ENCODE measurements at regions of chr16 and their contacts with region 1.

Region 1: DNA sequence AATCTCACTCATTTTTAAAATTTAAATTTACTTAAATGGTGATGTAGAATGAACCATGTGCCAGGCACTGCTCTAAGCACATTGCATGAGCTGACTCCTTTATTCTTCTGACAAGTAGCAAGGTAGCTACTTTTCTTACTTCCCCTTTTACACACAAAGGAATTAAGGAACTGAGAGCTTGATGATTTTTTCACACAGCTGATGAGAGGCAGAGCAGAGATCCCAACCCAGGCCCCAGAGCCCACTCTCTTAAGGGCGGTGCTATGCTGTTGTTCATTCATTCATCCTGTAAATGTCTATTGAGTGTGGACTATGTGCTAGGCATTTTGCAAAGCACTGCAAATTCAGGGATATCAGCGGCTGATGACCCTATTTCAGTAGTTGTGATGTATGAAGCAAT is 17.9 kb downstream of the SEC14L5 start:
- DNase-seq: peak; percentile 39 to 82 (median 73)
- H3K4me3 ChIP-seq: no peak overlapping the region
- H3K27ac ChIP-seq: no peak overlapping the region
- H3K4me1 ChIP-seq: peaks cover 0 to 27% (median 6%) of the 10 kb centered on the region in 4 experiments
- H3K27me3 ChIP-seq: peaks cover 0 to 8% (median 2%) of the 10 kb centered on the region in 5 experiments

Region 2: DNA sequence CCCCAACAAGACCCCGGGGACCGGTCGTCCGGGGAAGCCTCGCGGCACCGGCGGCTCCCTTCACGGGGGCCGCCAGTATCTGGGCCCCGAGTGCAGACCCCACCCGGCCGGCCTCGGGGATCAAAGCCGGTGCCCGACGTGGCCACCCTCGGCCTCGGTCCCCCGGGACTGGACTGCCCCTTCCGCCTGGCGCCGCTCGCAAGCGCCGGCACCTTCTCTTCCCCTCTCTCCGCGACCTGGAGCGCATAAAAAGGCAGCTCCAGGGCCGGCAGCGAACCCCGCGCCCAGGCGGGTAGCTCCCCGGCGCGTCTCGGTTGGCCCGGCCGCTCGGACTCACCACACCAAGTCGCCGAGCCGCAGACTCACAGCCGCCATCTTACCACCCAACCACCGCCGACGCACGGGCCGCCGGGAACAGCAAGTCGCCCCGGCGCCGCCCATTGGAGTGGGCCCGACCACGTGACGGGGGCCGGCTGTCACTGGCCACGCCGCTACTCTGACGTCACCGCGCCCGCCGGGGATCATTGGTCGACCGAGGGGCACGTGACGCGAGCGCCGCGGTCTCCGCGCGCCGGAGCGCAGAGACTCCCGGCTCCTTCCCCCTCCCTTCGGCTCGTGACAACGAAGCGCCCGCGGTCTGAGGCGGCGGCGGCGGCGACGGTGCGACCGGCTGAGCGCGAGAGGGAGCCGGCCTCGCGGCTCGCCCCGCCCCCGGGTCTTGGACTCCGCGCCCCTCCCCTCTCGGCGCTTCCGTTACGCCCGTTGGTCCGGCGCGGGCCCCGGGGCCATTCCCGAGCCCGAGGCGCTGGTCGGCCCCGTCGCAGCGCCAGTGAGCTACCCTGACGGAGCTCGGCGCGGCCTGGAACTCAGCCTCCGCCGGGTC is 128.9 kb before region 1 on chr16 and contains the starts of genes GLYR1 and UBN1:
- CTCF ChIA-PET with region 1: no interaction called
- POLR2A ChIA-PET with region 1: no interaction called
- DNase-seq: peak; percentile 98 to 99 (median 98)
- H3K4me3 ChIP-seq: peak within 1 kb of the TSS; percentile 81 to 99 (median 86)
- H3K27ac ChIP-seq: peak within 1 kb of the TSS; percentile 87 to 95
- H3K4me1 ChIP-seq: peaks cover 14 to 43% (median 30%) of the 10 kb centered on the region in 4 experiments
- H3K27me3 ChIP-seq: no peaks in the 10 kb centered on the region

Region 3: DNA sequence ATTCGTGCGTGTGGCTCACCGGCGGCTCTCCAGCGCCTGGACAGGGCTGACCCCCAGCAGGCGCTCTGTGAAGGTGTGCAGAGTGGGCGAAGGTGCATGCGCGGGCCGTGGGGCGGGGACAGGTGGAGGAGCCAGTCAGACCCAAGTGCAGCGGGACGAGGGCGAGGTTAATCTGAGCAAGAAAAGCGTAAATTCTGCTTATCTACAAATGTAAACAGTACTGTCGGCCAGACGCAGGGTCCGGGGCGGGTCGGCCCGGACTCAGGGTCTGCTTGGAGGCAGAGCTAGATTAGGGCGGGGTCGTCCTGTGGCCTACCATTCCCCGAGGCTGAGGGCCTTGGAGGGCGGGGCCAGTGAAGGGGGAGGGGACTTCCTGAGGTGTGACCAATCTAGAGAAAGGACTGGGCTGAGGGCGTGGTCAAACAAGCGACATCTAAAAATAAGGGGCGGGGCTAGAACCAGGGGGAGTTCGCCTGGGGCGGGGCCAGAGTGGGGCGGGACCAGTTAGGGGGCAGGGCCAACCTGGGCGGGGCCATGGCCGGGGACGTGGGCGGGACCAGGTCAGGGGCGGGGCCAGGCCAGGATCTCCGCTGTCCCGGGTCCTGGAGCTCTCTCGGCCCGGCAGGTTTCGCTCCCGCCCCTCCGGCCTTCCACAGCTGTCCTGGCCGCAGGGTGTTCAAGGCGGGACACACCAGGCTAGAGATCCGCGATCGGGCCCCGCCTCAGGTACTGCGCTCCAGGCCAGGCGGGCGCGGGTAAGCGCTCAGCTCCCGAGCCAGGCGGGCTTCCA is 18.2 kb before region 1 on chr16 and contains the start of gene SEC14L5:
- CTCF ChIA-PET with region 1: interaction called, 10 read pairs
- POLR2A ChIA-PET with region 1: no interaction called
- DNase-seq: peak; percentile 97 to 98 (median 98)
- H3K4me3 ChIP-seq: peak within 1 kb of the TSS; percentile 51 to 81 (median 70)
- H3K27ac ChIP-seq: no peak within 1 kb of the TSS
- H3K4me1 ChIP-seq: peaks cover 0 to 24% (median 15%) of the 10 kb centered on the region in 4 experiments
- H3K27me3 ChIP-seq: peaks cover 0 to 32% (median 7%) of the 10 kb centered on the region in 5 experiments

Region 4: GRCh38 chr16:4987580-4988374 is 11.7 kb after region 1 on chr16:
- CTCF ChIA-PET with region 1: no interaction called
- POLR2A ChIA-PET with region 1: no interaction called
- DNase-seq: peak in 2 of 3 donors; percentile 10 to 27
- H3K4me3 ChIP-seq: peak overlapping the region in 2 of 7 experiments; percentile 11 to 30
- H3K27ac ChIP-seq: no peak overlapping the region
- H3K4me1 ChIP-seq: peaks cover 0 to 11% (median 10%) of the 10 kb centered on the region in 4 experiments
- H3K27me3 ChIP-seq: peaks cover 6 to 51% (median 14%) of the 10 kb centered on the region in 5 experiments

Measured in common myeloid progenitor, CD34-positive (primary cell).